Dendritic cell treated with granulocyte-macrophage colony-stimulating factor and Interleukin-4, amounts not matched to agents 40 ng/mL and 50 ng/mL, for 4 days (primary cell): ENCODE measurements at regions of chr6 and their contacts with region 1.

Region 1: GRCh38 chr6:43951063-43951755 is 176.0 kb downstream of the MRPL14 start:
- H3K4me3 Mint-ChIP-seq: no peak overlapping the region
- H3K27ac Mint-ChIP-seq: peak overlapping the region; percentile 17
- H3K4me1 Mint-ChIP-seq: peaks cover 7% of the 10 kb centered on the region
- H3K27me3 Mint-ChIP-seq: peaks cover 22% of the 10 kb centered on the region

Region 2: GRCh38 chr6:43774776-43775534 is 176.3 kb before region 1 on chr6:
- intact Hi-C with region 1: loop called (anchors 1 kb)
- H3K4me3 Mint-ChIP-seq: peak overlapping the region; percentile 62
- H3K27ac Mint-ChIP-seq: peak overlapping the region; percentile 51
- H3K4me1 Mint-ChIP-seq: peaks cover 55% of the 10 kb centered on the region
- H3K27me3 Mint-ChIP-seq: peaks cover 2% of the 10 kb centered on the region

Region 3: DNA sequence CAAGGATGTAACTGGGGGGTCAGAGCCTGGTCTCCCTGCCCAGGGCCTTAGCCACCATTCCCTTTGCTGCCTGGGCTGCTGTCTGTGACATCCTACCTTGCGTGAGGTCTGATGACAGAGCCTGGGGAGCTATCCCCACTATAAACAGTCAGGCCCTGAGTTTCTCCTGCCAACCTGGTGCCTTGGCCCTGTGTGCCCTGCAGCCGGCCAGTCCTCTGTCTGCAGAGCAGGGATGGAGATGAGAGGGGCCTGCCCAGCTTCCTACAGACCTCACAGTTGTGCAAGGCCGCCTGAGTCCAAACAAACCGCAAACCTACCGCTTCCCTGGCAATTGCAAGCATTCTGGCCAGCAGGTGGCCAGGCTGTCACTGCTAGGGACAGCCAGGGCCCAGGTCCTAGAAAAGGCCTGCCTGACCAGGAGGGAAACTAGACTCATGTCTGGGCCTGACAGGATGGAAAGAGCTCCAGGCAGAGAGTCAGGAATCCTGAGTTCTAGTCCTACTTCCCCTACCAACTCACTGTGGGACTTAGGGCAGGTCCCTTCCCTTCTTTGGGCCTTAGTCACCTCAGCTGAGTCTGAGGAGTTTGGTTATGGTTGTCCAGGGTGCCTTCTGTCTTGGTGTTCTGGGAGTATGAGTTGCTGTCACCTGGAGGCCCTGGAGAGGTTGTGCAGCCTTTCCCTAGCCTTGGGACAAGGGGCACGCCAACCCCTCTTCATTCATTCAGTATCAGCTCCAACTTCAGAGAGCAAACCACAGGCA is 95.0 kb before region 1 on chr6:
- intact Hi-C with region 1: loop called (anchors 2 kb)
- H3K4me3 Mint-ChIP-seq: no peak overlapping the region
- H3K27ac Mint-ChIP-seq: no peak overlapping the region
- H3K4me1 Mint-ChIP-seq: peaks cover 13% of the 10 kb centered on the region
- H3K27me3 Mint-ChIP-seq: peaks cover 26% of the 10 kb centered on the region